ENCODE measurements at regions of chr9 and their contacts with region 1.

Region 1: DNA sequence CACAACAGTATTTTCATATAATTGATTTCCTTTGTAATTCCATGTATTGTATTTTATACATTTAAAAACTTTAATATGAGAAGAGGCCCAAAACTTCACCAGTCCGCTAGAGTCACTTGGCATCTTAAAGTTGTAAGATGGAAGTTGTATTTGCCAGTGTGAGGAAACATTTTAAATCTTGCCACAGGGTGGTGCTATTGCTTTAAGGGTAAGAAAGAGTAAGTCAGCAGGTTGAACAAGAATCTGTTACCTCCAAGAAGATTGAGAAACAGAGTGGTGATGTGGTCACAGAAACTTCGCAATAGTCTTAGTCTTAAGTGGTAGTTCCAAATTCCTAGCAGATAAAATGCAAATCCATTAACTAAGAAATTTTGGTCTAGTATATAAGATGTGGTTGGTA is 39.8 kb upstream of the RANBP6 start:
- DNase-seq: peak in 1 of 5 donors; percentile 42
- H3K4me3 ChIP-seq: no peak overlapping the region
- H3K27ac ChIP-seq: no peak overlapping the region
- H3K4me1 ChIP-seq: no peaks in the 10 kb centered on the region
- H3K27me3 ChIP-seq: no peaks in the 10 kb centered on the region
- CTCF ChIP-seq: peak in 2 of 3 donors; percentile 36 to 43
- EP300 ChIP-seq: no peak
- POLR2A ChIP-seq: no peak

Region 2: DNA sequence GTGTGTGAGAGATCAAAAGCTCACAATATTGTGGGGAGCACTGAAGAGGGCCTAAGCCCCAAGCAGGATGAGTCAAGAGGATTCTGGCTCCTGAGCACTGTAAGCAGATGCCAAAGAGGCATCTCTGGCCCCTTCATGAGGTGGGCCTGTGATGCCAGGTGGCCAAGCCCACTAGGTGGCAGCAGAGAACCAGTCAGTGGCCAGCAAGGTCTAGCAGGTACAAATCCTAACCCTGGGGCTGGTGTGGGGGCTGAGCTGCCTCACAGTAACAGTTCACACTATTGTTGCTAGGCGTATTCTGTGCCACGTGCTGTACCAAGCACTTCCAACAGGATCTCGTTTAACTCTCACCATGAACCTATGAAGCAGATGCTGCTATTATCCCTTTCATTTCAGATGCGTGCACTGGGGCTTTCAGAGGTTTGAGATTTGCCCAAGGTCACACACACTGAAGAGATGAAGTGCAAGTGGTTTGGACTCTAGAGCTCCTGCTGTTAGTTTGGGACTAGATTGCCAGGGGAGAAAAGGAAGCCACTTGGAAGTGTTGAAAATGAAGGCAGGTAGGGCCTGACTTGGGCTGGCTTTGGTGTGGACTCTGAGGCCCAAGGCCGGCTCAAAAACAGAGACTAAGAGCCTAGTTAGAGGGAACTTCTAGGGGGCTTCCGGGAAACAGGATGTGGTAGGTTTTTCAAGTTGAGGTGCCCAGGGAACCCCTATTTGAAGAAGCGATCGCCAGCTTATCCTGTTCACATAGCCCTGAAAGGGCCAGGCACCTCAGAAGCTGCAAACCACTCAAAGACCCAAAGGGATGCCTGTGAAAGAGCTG is 168.9 kb before region 1 on chr9:
- intact Hi-C with region 1: loop called in 2 of 4 experiments (anchors 10 kb)
- DNase-seq: peak; percentile 62 to 83 (median 79)
- H3K4me3 ChIP-seq: no peak overlapping the region
- H3K27ac ChIP-seq: no peak overlapping the region
- H3K4me1 ChIP-seq: no peaks in the 10 kb centered on the region
- H3K27me3 ChIP-seq: no peaks in the 10 kb centered on the region
- CTCF ChIP-seq: peak; percentile 62 to 79 (median 68)
- EP300 ChIP-seq: no peak
- POLR2A ChIP-seq: no peak

Region 3: DNA sequence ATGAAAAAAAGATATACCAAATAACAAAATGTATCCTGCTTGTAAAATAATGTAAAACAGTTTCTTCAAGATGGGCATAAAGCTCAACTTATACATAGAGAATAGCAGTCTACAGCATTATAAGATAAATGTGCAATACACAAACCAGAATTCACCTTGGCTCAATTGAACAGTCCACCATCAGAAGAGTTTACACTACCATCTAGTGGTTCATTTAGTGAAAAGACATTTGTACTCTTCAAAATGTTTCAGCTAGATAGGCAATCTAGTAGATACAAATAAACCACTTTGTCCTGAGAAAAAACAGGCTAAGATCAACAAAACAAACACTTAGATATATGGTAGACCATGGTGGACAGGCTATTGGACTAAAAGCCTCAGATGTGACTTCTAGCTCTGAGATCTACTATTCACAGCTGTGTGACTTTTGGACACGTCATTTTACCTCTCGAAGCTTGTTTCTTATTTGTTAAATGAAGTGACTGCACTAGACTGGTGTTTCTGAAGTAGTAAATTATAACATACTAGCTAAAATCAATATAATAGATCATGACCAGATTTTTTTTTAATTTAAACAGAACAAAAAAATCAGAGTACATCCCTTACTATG is 250.8 kb after region 1 on chr9:
- intact Hi-C with region 1: loop called in 3 of 4 experiments (anchors 10 kb)
- DNase-seq: no peak
- H3K4me3 ChIP-seq: no peak overlapping the region
- H3K27ac ChIP-seq: no peak overlapping the region
- H3K4me1 ChIP-seq: no peaks in the 10 kb centered on the region
- H3K27me3 ChIP-seq: no peaks in the 10 kb centered on the region
- CTCF ChIP-seq: peak in 1 of 3 donors; percentile 73
- EP300 ChIP-seq: no peak
- POLR2A ChIP-seq: no peak

Measured in ovary (tissue), 10 donors.